ENCODE measurements at regions of chr19 and their contacts with region 1.

Region 1: GRCh38 chr19:13060964-13061927 is 41.4 kb downstream of the LYL1 start:
- DNase-seq: peak in 1 of 2 donors; percentile 92
- H3K4me3 ChIP-seq: peak overlapping the region; percentile 44 to 65
- H3K27ac ChIP-seq: peak overlapping the region; percentile 99
- H3K4me1 ChIP-seq: peaks cover 81 to 97% of the 10 kb centered on the region in 2 donors
- H3K27me3 ChIP-seq: no peaks in the 10 kb centered on the region
- CTCF ChIP-seq: peak; percentile 97 to 99 (median 97)

Region 2: DNA sequence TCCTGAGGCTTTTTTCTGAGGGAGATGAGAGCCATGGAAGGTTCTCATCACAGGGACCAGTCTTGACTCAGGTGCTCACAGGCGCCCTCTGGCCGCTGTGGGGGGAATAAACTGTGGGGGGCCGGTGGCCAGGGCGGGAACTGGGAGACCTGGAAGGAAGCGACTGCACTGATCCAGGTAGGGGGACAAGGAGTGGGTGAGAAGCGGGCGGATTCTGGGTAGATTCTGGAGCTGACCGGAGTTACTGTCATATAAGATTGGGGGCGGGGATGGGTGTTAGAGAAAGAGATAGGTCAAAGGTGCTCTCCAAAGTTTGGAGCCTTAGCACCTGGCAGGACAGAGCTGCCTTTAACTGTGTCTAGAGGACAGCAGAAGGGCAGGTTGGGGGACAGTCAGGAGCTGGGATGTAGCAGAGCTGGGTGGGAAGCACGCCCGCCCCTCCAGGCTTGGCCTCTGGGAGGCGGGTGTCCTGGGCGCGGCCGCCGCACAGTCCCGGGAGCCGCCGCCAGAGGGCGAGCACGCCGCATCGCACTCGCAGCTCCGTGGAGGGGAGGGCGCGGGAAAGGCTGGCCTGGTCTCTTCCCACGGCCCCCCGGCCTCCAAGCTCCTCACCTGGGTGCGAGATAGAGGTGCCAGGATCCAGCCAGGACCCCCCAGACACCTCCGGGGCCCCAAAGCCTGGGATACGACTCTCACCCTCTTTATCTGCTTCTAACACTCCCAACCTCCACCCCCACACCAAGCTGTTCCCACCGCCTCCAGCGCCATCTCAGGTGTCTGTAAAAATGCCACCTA is 96.0 kb before region 1 on chr19:
- intact Hi-C with region 1: no loop called
- DNase-seq: peak in 1 of 2 donors; percentile 90
- H3K4me3 ChIP-seq: peak overlapping the region; percentile 56 to 73
- H3K27ac ChIP-seq: peak overlapping the region; percentile 12 to 71
- H3K4me1 ChIP-seq: peaks cover 0 to 4% of the 10 kb centered on the region in 2 donors
- H3K27me3 ChIP-seq: no peaks in the 10 kb centered on the region
- CTCF ChIP-seq: peak; percentile 72 to 95 (median 87)

Region 3: GRCh38 chr19:12983542-12984142 is 77.6 kb before region 1 on chr19:
- intact Hi-C with region 1: loop called (anchors 1 kb)
- DNase-seq: peak in 1 of 2 donors; percentile 91
- H3K4me3 ChIP-seq: peak overlapping the region; percentile 36 to 51
- H3K27ac ChIP-seq: no peak overlapping the region
- H3K4me1 ChIP-seq: peaks cover 0 to 5% of the 10 kb centered on the region in 2 donors
- H3K27me3 ChIP-seq: no peaks in the 10 kb centered on the region
- CTCF ChIP-seq: peak; percentile 86 to 99 (median 96)

Region 4: GRCh38 chr19:13002166-13002898 is 58.9 kb before region 1 on chr19:
- intact Hi-C with region 1: loop called (anchors 2 kb)
- DNase-seq: peak in 1 of 2 donors; percentile 87
- H3K4me3 ChIP-seq: peak overlapping the region; percentile 44 to 65
- H3K27ac ChIP-seq: peak overlapping the region; percentile 95 to 98
- H3K4me1 ChIP-seq: peaks cover 20 to 80% of the 10 kb centered on the region in 2 donors
- H3K27me3 ChIP-seq: no peaks in the 10 kb centered on the region
- CTCF ChIP-seq: peak; percentile 7 to 60 (median 26)

Region 5: GRCh38 chr19:13022859-13023636 is 38.2 kb before region 1 on chr19:
- intact Hi-C with region 1: loop called (anchors 5 kb)
- DNase-seq: peak in 1 of 2 donors; percentile 93
- H3K4me3 ChIP-seq: peak overlapping the region; percentile 57 to 67
- H3K27ac ChIP-seq: peak overlapping the region; percentile 95 to 97
- H3K4me1 ChIP-seq: peaks cover 18 to 62% of the 10 kb centered on the region in 2 donors
- H3K27me3 ChIP-seq: no peaks in the 10 kb centered on the region
- CTCF ChIP-seq: no peak

Region 6: GRCh38 chr19:13033819-13034611 is 27.2 kb before region 1 on chr19:
- intact Hi-C with region 1: loop called (anchors 1 kb)
- DNase-seq: peak in 1 of 2 donors; percentile 87
- H3K4me3 ChIP-seq: peak overlapping the region in 1 of 2 donors; percentile 18
- H3K27ac ChIP-seq: peak overlapping the region; percentile 95 to 97
- H3K4me1 ChIP-seq: peaks cover 45 to 94% of the 10 kb centered on the region in 2 donors
- H3K27me3 ChIP-seq: no peaks in the 10 kb centered on the region
- CTCF ChIP-seq: peak; percentile 67 to 73 (median 69)

Region 7: DNA sequence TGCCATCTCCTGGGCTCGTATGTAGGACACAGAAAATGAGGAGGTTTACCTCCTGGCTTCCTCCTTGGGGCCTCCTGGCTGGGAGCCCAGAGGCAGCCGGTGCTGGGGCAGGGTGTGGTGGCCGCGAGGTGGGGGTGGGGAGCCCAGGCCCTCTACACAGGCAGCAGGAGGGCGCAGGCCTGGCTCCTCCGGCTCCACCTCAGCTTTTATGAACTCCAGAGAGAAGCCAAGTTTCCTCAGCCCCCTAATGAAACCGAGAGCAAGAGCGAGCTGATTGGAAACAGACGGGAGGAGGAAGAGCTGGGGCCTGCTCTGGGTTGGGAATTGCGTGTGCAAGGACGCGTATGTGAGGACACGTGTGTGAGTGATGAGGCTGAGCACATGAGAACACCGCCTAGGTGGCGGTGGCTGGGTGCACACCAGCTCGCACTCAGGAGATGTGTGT is 18.3 kb after region 1 on chr19:
- intact Hi-C with region 1: loop called (anchors 2 kb)
- DNase-seq: no peak
- H3K4me3 ChIP-seq: no peak overlapping the region
- H3K27ac ChIP-seq: peak overlapping the region; percentile 74 to 99
- H3K4me1 ChIP-seq: peaks cover 30 to 62% of the 10 kb centered on the region in 2 donors
- H3K27me3 ChIP-seq: no peaks in the 10 kb centered on the region
- CTCF ChIP-seq: no peak

Region 8: DNA sequence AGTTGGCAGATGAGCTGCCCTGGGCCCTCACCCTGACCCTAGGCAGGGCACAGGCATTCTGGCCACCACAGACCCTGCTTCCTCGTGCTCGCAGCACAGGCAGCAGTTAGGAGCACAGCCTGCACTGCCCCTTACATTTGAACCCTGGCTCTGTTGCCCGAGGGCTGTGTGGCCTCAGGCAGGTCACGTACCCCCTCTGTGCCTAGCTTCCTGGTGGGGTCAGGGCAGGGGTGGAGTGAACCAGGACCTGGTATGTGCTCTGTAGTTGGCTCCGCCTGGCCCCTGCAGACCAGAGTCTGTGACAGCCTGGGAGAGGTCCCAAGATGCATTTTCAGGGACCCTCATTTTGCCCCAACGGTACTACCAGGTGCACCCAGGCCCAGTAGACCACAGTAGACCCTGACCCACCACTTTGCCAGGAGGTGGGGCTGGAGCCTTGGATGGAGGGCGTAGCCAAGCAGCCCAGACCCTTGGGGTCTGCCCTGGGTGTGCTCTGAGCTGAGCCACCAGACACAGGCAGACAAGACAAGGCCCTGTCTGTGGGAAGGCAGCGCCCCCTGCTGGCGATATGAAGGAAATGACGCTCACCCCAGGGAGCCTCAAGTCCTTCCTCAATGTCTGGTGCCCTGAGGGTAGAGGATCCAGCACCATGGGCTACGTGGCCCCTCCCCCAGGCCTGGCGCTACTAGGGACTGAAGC is 32.3 kb after region 1 on chr19:
- intact Hi-C with region 1: loop called (anchors 2 kb)
- DNase-seq: peak in 1 of 2 donors; percentile 94
- H3K4me3 ChIP-seq: no peak overlapping the region
- H3K27ac ChIP-seq: peak overlapping the region; percentile 93 to 94
- H3K4me1 ChIP-seq: peaks cover 45 to 59% of the 10 kb centered on the region in 2 donors
- H3K27me3 ChIP-seq: no peaks in the 10 kb centered on the region
- CTCF ChIP-seq: peak; percentile 90 to 98 (median 94)

Region 9: DNA sequence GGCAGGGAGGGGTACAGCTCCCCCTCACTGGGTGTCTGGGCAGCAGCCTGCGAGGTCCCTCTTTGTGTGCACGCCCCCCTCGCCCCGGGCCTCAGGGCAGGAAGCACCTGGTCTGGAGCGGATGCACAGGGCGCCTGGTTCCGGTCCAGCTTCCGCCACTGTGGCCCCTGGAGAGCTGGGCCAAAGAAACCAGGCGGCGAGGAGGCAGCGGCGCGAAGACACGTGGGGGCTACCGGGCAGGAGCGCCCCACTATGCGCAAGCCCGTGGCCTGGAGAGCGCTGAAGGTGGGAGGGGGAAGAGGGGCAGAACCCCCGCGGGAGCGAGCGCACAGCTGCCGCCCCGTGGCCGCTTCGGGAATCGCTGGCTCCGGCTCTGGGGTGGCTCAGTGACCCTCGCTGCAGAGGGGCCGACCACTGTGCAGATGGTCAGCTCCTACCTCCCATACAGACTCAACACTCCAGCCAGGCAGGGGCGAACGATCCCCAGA is 43.2 kb after region 1 on chr19:
- intact Hi-C with region 1: no loop called
- DNase-seq: peak in 1 of 2 donors; percentile 82
- H3K4me3 ChIP-seq: peak overlapping the region in 1 of 2 donors; percentile 26
- H3K27ac ChIP-seq: peak overlapping the region; percentile 36 to 92
- H3K4me1 ChIP-seq: peaks cover 14 to 19% of the 10 kb centered on the region in 2 donors
- H3K27me3 ChIP-seq: no peaks in the 10 kb centered on the region
- CTCF ChIP-seq: peak; percentile 74 to 84 (median 79)